Activated naive CD4-positive, alpha-beta T cell treated with anti-CD3 and anti-CD28 coated beads for 36 hours (primary cell): ENCODE measurements at regions of chr4 and their contacts with region 1.

Region 1: GRCh38 chr4:84582302-84583000 is 476 bp upstream of the CDS1 start:
- DNase-seq: peak; percentile 95
- H3K4me3 Mint-ChIP-seq: peak overlapping the region; percentile 69
- H3K27ac Mint-ChIP-seq: no peak overlapping the region
- H3K4me1 Mint-ChIP-seq: peaks cover 12% of the 10 kb centered on the region
- H3K27me3 Mint-ChIP-seq: peaks cover 34% of the 10 kb centered on the region

Region 2: GRCh38 chr4:82667761-82668505 is 1914.5 kb before region 1 on chr4:
- CTCF ChIA-PET with region 1: no interaction called
- intact Hi-C with region 1: no loop called
- DNase-seq: no peak
- H3K4me3 Mint-ChIP-seq: no peak overlapping the region
- H3K27ac Mint-ChIP-seq: no peak overlapping the region
- H3K4me1 Mint-ChIP-seq: no peaks in the 10 kb centered on the region
- H3K27me3 Mint-ChIP-seq: peaks cover 9% of the 10 kb centered on the region

Region 3: DNA sequence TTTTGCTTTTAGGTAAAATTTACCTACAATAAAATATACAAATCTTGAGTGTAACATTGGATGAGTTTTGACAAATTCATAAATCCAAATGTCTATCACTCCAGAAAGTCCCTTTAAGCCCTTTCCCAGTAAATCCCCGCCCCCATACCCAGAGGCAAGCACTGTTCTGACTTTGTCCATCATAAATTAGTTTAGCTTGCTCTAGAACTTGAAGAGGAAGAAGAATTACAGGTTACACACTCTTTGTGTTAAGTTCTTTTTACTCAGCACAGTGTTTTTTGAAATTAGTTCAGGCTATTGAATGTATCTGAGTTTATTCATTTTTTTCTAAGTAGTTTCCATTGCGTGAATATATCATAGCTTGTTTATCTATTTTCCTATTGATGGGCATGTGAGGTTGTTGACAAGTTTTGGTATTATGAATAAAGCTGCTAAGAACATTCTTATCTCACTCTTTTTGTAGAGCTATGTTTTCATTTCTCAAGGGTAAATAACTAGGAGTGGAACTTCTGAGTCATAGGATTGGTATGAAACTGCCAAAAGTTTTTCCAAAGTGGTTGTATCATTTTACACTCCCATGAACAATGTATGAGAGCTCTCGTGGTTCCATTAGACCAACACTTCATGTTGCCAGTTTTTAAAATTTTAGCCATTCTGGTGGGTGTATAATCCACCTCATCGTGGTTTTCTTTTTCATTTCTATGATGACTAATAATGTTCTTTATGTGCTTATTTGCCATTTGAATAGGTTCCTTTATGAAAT is 1225.4 kb before region 1 on chr4:
- CTCF ChIA-PET with region 1: no interaction called
- intact Hi-C with region 1: loop called (anchors 10 kb)
- DNase-seq: peak; percentile 63
- H3K4me3 Mint-ChIP-seq: no peak overlapping the region
- H3K27ac Mint-ChIP-seq: peak overlapping the region; percentile 62
- H3K4me1 Mint-ChIP-seq: peaks cover 15% of the 10 kb centered on the region
- H3K27me3 Mint-ChIP-seq: no peaks in the 10 kb centered on the region

Region 4: GRCh38 chr4:83484500-83485461 is 1097.7 kb before region 1 on chr4 and contains the start of gene ABRAXAS1:
- CTCF ChIA-PET with region 1: no interaction called
- intact Hi-C with region 1: loop called (anchors 1 kb)
- DNase-seq: peak; percentile 92
- H3K4me3 Mint-ChIP-seq: peak within 1 kb of the TSS; percentile 99
- H3K27ac Mint-ChIP-seq: peak within 1 kb of the TSS; percentile 91
- H3K4me1 Mint-ChIP-seq: peaks cover 19% of the 10 kb centered on the region
- H3K27me3 Mint-ChIP-seq: no peaks in the 10 kb centered on the region
- total RNA-seq, gene ABRAXAS1: 19.7 to 20.9 TPM

Region 5: DNA sequence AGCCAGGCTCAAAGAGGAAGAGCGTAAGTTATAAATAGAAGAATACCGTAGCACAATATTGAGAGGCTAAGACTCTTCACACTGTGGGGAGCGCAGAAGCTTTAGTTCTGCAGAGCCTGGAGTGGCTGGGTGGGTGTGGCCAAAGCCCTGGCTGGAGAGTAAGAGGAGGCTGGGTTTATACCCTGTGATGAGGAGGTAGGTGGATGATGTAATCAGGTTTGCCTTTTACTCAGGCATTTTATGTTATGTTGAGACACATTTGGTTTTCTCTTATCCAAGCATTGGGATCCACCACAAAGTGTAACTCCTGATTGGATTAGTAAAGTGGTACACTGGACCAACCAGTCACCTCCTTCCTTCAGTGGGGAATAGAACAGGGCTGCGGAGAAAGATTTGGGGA is 14.4 kb after region 1 on chr4:
- CTCF ChIA-PET with region 1: interaction called, 4 read pairs
- intact Hi-C with region 1: loop called (anchors 1 kb)
- DNase-seq: peak; percentile 43
- H3K4me3 Mint-ChIP-seq: no peak overlapping the region
- H3K27ac Mint-ChIP-seq: no peak overlapping the region
- H3K4me1 Mint-ChIP-seq: peaks cover 7% of the 10 kb centered on the region
- H3K27me3 Mint-ChIP-seq: peaks cover 1% of the 10 kb centered on the region

Region 6: GRCh38 chr4:84691170-84691691 is 108.8 kb after region 1 on chr4:
- CTCF ChIA-PET with region 1: no interaction called
- intact Hi-C with region 1: loop called (anchors 5 kb)
- DNase-seq: no peak
- H3K4me3 Mint-ChIP-seq: no peak overlapping the region
- H3K27ac Mint-ChIP-seq: no peak overlapping the region
- H3K4me1 Mint-ChIP-seq: peaks cover 5% of the 10 kb centered on the region
- H3K27me3 Mint-ChIP-seq: peaks cover 7% of the 10 kb centered on the region

Region 7: DNA sequence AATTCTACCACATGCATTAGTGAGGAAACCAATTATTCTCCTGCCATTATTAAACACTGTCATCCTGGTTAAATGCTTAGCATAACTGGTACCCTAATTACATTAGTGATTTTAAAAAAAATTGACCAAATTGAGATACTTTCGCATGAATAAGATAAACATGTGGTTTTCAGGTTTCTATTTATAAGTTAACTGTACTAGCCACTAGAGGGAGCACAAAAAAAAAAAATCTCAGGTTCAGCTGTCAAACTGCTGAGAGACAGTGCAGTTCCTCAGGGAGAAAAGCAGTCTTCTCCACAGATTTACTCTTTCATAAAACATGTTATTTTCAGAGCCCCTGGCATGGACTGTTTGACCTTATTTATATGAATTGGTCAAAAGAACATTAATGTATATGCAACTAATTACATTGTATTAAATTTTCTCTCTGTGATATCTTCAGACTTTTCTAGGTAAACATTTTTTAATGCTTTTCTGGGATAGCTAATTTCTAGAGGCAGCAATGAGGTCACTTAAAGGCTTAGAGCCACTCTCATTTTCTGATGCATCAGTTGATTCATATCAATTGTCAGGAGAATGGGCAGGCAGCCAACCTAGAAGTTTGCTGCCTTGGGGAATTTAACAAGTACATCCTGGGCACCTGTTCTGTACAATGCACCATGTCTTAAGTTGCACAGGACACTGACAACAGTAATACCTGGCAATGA is 168.0 kb after region 1 on chr4:
- CTCF ChIA-PET with region 1: no interaction called
- intact Hi-C with region 1: loop called (anchors 1 kb)
- DNase-seq: no peak
- H3K4me3 Mint-ChIP-seq: no peak overlapping the region
- H3K27ac Mint-ChIP-seq: no peak overlapping the region
- H3K4me1 Mint-ChIP-seq: no peaks in the 10 kb centered on the region
- H3K27me3 Mint-ChIP-seq: peaks cover 2% of the 10 kb centered on the region

Region 8: DNA sequence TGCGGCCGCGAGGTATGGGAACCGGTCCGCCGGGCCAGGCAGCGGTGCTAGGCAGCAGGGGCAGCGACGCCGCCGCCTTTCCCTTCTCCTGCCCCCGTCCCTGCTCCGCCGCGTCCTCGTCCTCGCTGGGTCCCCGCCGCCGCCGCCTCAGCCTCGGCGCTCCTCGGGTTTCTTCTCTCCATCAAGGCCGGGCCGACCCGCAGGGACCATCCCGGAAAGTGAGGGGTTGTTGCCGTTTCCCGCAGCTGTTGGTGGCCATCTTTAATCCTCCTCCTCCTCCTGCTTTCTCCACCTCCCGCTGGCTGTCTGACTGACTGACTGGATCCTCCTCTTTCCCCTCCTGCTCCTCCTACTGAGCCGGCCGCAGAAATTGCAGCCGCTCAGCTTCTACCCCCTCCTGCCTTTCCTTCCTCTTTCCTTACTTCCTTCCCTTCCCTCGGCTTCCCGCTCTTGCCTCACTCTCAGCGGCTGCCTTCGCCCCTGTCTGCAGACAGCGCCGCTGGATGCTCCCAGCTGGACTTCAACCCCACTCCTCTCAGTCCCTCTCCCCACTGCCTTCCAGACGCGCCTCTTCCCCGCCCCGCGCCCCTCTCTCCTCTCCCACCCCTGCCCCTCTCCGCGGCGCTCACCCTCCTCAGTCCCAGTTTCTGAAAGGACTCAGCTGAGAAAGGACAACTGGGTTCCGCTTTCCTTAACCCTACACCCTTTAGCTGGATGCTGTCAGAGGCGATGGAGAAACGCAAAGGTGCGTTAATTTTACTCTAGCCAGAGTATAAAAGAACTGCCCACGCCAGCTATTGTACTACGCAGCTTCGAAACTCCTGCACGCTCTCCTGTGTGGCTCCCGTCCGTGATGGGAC is 384.2 kb after region 1 on chr4 and contains the start of gene WDFY3:
- CTCF ChIA-PET with region 1: interaction called, 18 read pairs
- intact Hi-C with region 1: loop called (anchors 1 kb)
- DNase-seq: peak; percentile 35
- H3K4me3 Mint-ChIP-seq: peak within 1 kb of the TSS; percentile 85
- H3K27ac Mint-ChIP-seq: no peak within 1 kb of the TSS
- H3K4me1 Mint-ChIP-seq: peaks cover 14% of the 10 kb centered on the region
- H3K27me3 Mint-ChIP-seq: peaks cover 38% of the 10 kb centered on the region
- total RNA-seq, gene WDFY3: 1.0 to 1.2 TPM